Activated CD4-positive, alpha-beta memory T cell treated with anti-CD3 and anti-CD28 coated beads, Interleukin-2, amount 10 ng/mL, durations not matched to agents 7 days and 5 days (primary cell): ENCODE measurements at regions of chr1 and their contacts with region 1.

Region 1: GRCh38 chr1:32005522-32005921 is 8.1 kb upstream of the KHDRBS1 start:
- DNase-seq: no peak
- H3K4me3 Mint-ChIP-seq: no peak overlapping the region
- H3K27ac Mint-ChIP-seq: no peak overlapping the region
- H3K4me1 Mint-ChIP-seq: peaks cover 9% of the 10 kb centered on the region
- H3K27me3 Mint-ChIP-seq: peaks cover 1% of the 10 kb centered on the region

Region 2: GRCh38 chr1:31991182-31991581 is 14.3 kb before region 1 on chr1:
- CTCF ChIA-PET with region 1: interaction called, 27 read pairs
- POLR2A ChIA-PET with region 1: no interaction called
- DNase-seq: no peak
- H3K4me3 Mint-ChIP-seq: no peak overlapping the region
- H3K27ac Mint-ChIP-seq: no peak overlapping the region
- H3K4me1 Mint-ChIP-seq: peaks cover 26% of the 10 kb centered on the region
- H3K27me3 Mint-ChIP-seq: peaks cover 2% of the 10 kb centered on the region